Endothelial cell of umbilical vein (primary cell): ENCODE measurements at regions of chr1 and their contacts with region 1.

Region 1: GRCh38 chr1:116139592-116140134 is 28.5 kb downstream of the MAB21L3 start:
- DNase-seq: no peak
- H3K4me3 ChIP-seq: no peak overlapping the region
- H3K27ac ChIP-seq: no peak overlapping the region
- H3K4me1 ChIP-seq: peaks cover 2% of the 10 kb centered on the region
- H3K27me3 ChIP-seq: peaks cover 0 to 10% of the 10 kb centered on the region in 2 experiments
- CTCF ChIP-seq: no peak
- POLR2A ChIP-seq: no peak

Region 2: DNA sequence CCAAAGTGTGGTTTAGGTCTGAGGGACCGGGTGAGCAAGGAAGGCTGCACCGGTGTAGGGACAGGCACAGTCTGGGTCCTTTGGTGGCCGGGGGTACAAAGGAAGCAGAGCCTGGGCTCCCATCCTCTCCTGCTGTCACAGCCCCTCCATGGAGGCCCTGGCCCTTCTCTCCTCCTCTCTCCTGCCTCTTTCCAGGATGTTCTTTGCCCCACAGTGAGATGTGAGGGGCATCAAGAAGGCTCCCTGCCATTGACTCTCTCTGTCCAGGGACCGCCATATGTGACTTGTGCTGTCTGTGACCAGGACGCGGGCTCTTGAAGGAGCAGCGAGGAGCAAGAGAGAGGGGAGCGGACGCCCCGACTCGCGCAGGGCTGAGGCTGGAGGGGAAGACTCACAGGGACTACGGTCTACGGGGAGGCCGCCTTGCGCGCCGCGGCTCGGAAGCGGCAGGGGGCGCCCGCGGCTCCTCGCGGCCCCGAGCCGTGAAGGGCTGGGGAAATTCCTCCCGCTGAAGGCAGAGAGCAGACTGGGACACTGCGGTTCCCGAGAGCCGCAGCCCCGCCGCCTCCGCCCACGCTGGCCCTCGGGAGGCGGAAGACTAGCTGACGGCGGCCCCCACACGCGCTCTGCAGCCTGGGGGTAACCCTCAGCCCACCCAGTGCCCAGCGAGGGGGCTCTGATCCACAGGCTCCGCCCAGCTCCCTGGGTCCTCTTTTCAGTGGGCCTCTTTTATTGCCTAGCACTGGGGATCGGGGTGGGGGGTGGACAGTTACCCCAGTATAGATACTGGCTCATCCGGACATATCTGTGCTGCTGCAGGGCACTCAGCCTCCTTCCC is 12.3 kb after region 1 on chr1:
- CTCF ChIA-PET with region 1: interaction called, 81 read pairs
- POLR2A ChIA-PET with region 1: no interaction called
- dilution Hi-C with region 1: no loop called
- intact Hi-C with region 1: loop called (anchors 1 kb)
- DNase-seq: peak; percentile 78
- H3K4me3 ChIP-seq: peak overlapping the region; percentile 34 to 42 (median 37)
- H3K27ac ChIP-seq: peak overlapping the region; percentile 84
- H3K4me1 ChIP-seq: peaks cover 16% of the 10 kb centered on the region
- H3K27me3 ChIP-seq: peaks cover 5 to 9% of the 10 kb centered on the region in 2 experiments
- CTCF ChIP-seq: peak; percentile 88 to 90
- POLR2A ChIP-seq: no peak

Region 3: GRCh38 chr1:116168277-116169097 is 28.8 kb after region 1 on chr1:
- CTCF ChIA-PET with region 1: interaction called, 20 read pairs
- POLR2A ChIA-PET with region 1: no interaction called
- dilution Hi-C with region 1: no loop called
- intact Hi-C with region 1: loop called (anchors 1 kb)
- DNase-seq: peak; percentile 53
- H3K4me3 ChIP-seq: peak overlapping the region in 2 of 3 experiments; percentile 13 to 49
- H3K27ac ChIP-seq: no peak overlapping the region
- H3K4me1 ChIP-seq: no peaks in the 10 kb centered on the region
- H3K27me3 ChIP-seq: peaks cover 5 to 14% of the 10 kb centered on the region in 2 experiments
- CTCF ChIP-seq: peak; percentile 94 to 95
- POLR2A ChIP-seq: no peak

Region 4: GRCh38 chr1:116397728-116398127 is 258.1 kb after region 1 on chr1:
- CTCF ChIA-PET with region 1: interaction called, 12 read pairs
- POLR2A ChIA-PET with region 1: no interaction called
- dilution Hi-C with region 1: no loop called
- intact Hi-C with region 1: no loop called
- DNase-seq: no peak
- H3K4me3 ChIP-seq: no peak overlapping the region
- H3K27ac ChIP-seq: no peak overlapping the region
- H3K4me1 ChIP-seq: no peaks in the 10 kb centered on the region
- H3K27me3 ChIP-seq: no peaks in the 10 kb centered on the region
- CTCF ChIP-seq: no peak
- POLR2A ChIP-seq: no peak

Region 5: GRCh38 chr1:116674011-116674531 is 534.4 kb after region 1 on chr1:
- CTCF ChIA-PET with region 1: interaction called, 10 read pairs
- POLR2A ChIA-PET with region 1: no interaction called
- dilution Hi-C with region 1: no loop called
- intact Hi-C with region 1: no loop called
- DNase-seq: no peak
- H3K4me3 ChIP-seq: no peak overlapping the region
- H3K27ac ChIP-seq: no peak overlapping the region
- H3K4me1 ChIP-seq: no peaks in the 10 kb centered on the region
- H3K27me3 ChIP-seq: peaks cover 0 to 7% of the 10 kb centered on the region in 2 experiments
- CTCF ChIP-seq: no peak
- POLR2A ChIP-seq: no peak